Psoas muscle (tissue), 8 donors: ENCODE measurements at regions of chr10 and their contacts with region 1.

Region 1: GRCh38 chr10:119919826-119920225 is 27.3 kb downstream of the SEC23IP start:
- DNase-seq: no peak
- ATAC-seq: no peak
- H3K4me3 ChIP-seq: no peak overlapping the region
- H3K27ac ChIP-seq: no peak overlapping the region
- H3K4me1 ChIP-seq: no peaks in the 10 kb centered on the region
- H3K27me3 ChIP-seq: no peaks in the 10 kb centered on the region
- CTCF ChIP-seq: no peak

Region 2: DNA sequence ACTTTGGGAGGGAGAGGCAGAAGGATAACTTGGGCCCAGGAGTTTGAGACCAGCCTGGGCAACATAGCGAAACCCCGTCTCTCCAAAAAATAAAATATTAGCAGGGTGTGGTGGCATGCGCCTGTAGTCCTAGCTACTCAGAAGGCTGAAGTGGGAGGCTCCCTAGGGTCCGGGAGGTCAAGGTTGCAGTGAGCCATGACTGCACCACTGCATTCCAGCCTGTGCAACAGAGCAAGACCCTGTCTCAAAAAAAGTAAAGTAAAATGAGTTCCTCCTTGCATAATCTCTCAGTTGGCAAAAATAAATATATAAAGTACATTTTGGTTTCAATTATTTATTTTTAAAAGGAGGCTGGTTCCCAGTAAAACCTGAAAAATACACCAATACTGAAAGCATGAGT is 878.5 kb before region 1 on chr10:
- intact Hi-C with region 1: loop called in 1 of 2 experiments (anchors 10 kb)
- DNase-seq: no peak
- ATAC-seq: no peak
- H3K4me3 ChIP-seq: no peak overlapping the region
- H3K27ac ChIP-seq: no peak overlapping the region
- H3K4me1 ChIP-seq: no peaks in the 10 kb centered on the region
- H3K27me3 ChIP-seq: no peaks in the 10 kb centered on the region
- CTCF ChIP-seq: no peak

Region 3: GRCh38 chr10:120873734-120874133 is 953.9 kb after region 1 on chr10:
- intact Hi-C with region 1: loop called in 1 of 2 experiments (anchors 10 kb)
- DNase-seq: no peak
- ATAC-seq: no peak
- H3K4me3 ChIP-seq: no peak overlapping the region
- H3K27ac ChIP-seq: no peak overlapping the region
- H3K4me1 ChIP-seq: no peaks in the 10 kb centered on the region
- H3K27me3 ChIP-seq: no peaks in the 10 kb centered on the region
- CTCF ChIP-seq: no peak